Natural killer cell (primary cell): ENCODE measurements at regions of chr9 and their contacts with region 1.

Region 1: DNA sequence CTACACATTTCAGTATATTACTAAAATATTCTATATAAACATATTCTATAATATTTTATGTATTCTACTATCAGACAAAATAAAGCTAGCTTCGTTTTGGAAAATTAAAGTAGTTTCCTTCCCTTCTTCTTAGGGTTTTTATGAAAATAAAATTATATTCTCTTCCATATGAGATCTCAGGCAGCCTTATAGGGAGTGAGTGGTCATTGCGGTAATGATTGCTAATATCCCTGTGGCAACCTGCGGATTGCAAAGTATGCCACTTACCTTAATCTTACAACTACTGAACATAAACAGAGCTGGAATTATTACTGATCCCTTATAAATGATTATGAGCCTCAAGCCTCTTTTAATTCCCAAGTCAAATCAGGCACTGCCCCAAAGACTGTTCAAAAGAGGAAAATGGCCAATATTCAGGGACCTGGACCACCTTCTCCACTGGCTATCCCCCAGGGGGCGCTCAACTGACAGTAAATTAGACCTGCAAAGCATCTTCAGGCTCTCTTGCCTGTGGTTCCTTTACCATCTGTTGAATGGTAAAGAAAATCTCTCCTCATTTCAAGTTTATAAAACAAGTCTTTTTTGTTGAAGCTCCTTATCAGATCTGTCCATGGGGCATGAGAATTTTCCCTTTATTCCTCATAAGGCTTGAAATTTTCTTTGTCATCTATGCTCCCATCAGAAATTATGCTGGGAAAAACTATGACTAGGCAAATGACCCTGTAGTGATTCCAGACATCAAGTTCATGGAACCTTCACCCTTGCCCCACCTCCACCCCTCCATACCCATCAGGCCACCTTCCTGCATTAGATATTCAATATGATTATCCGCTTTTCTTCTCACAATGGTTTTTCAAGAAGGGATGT is 163.9 kb downstream of the CEMIP2 start:
- DNase-seq: peak; percentile 71 to 83
- ATAC-seq: peak; percentile 86 to 97 (median 89)
- H3K4me3 ChIP-seq: no peak overlapping the region
- H3K4me3 Mint-ChIP-seq: no peak overlapping the region
- H3K27ac ChIP-seq: no peak overlapping the region
- H3K27ac Mint-ChIP-seq: no peak overlapping the region
- H3K4me1 ChIP-seq: no peaks in the 10 kb centered on the region
- H3K4me1 Mint-ChIP-seq: no peaks in the 10 kb centered on the region
- H3K27me3 ChIP-seq: no peaks in the 10 kb centered on the region
- H3K27me3 Mint-ChIP-seq: no peaks in the 10 kb centered on the region
- CTCF ChIP-seq: peak; percentile 92

Region 2: GRCh38 chr9:71685394-71685793 is 81.0 kb after region 1 on chr9:
- intact Hi-C with region 1: loop called (anchors 1 kb)
- DNase-seq: peak in 1 of 2 donors; percentile 78
- ATAC-seq: peak; percentile 85 to 96 (median 86)
- H3K4me3 ChIP-seq: peak overlapping the region; percentile 11
- H3K4me3 Mint-ChIP-seq: peak overlapping the region; percentile 89
- H3K27ac ChIP-seq: peak overlapping the region; percentile 54
- H3K27ac Mint-ChIP-seq: peak overlapping the region; percentile 83 to 94
- H3K4me1 ChIP-seq: peaks cover 22% of the 10 kb centered on the region
- H3K4me1 Mint-ChIP-seq: peaks cover 45 to 48% of the 10 kb centered on the region in 2 donors
- H3K27me3 ChIP-seq: no peaks in the 10 kb centered on the region
- H3K27me3 Mint-ChIP-seq: no peaks in the 10 kb centered on the region
- CTCF ChIP-seq: no peak

Region 3: DNA sequence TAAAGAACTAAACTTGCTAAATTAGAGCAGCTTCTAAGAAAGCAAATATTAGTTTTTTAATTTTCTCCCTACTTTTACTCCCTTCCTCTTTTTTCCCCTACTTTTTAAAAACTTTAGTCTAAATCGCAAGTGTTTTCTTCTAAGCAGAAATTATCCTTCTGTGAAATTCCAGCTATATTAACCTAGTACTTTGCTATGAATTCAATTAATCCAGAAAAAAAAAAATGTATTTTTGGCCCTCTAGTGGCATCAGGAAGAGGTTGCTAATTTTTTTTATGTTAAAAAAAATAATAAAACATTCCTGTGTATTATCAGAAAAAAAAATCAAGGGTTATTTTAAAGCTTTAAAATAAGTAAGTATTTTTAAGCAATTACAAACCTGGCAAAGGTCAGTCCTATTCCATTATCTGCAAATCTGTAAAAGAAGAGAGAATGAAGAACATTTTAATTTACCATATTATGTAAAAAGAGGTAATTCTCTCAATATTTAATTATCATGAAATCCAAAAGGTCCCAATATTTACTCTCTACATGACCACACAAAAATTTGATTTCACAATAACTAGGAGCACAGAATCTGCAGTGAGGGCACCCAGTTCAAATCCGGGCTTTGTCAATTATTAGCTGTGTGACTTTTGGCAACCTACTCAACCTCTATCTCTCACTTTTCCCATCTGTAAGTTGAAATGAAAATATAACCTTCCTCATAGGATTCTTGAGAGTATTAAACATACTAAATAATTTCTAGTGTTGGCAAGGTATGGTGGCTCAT is 111.9 kb after region 1 on chr9:
- intact Hi-C with region 1: loop called (anchors 2 kb)
- DNase-seq: no peak
- ATAC-seq: no peak
- H3K4me3 ChIP-seq: no peak overlapping the region
- H3K4me3 Mint-ChIP-seq: no peak overlapping the region
- H3K27ac ChIP-seq: no peak overlapping the region
- H3K27ac Mint-ChIP-seq: peak overlapping the region; percentile 34 to 42
- H3K4me1 ChIP-seq: no peaks in the 10 kb centered on the region
- H3K4me1 Mint-ChIP-seq: peaks cover 0 to 26% of the 10 kb centered on the region in 2 donors
- H3K27me3 ChIP-seq: no peaks in the 10 kb centered on the region
- H3K27me3 Mint-ChIP-seq: no peaks in the 10 kb centered on the region
- CTCF ChIP-seq: peak; percentile 80

Region 4: GRCh38 chr9:71768388-71769174 is 164.2 kb after region 1 on chr9 and contains the start of gene CEMIP2:
- intact Hi-C with region 1: loop called (anchors 1 kb)
- DNase-seq: peak; percentile 86 to 93
- ATAC-seq: peak; percentile 82 to 95 (median 86)
- H3K4me3 ChIP-seq: peak within 1 kb of the TSS; percentile 88
- H3K4me3 Mint-ChIP-seq: peak within 1 kb of the TSS; percentile 92
- H3K27ac ChIP-seq: peak within 1 kb of the TSS; percentile 96
- H3K27ac Mint-ChIP-seq: peak within 1 kb of the TSS; percentile 88 to 94
- H3K4me1 ChIP-seq: peaks cover 29% of the 10 kb centered on the region
- H3K4me1 Mint-ChIP-seq: peaks cover 54 to 56% of the 10 kb centered on the region in 2 donors
- H3K27me3 ChIP-seq: no peaks in the 10 kb centered on the region
- H3K27me3 Mint-ChIP-seq: no peaks in the 10 kb centered on the region
- CTCF ChIP-seq: peak; percentile 62
- total RNA-seq, gene CEMIP2: 204 to 326 (median 230) TPM

Region 5: GRCh38 chr9:71819115-71819739 is 214.8 kb after region 1 on chr9:
- intact Hi-C with region 1: loop called (anchors 1 kb)
- DNase-seq: peak in 1 of 2 donors; percentile 80
- ATAC-seq: no peak
- H3K4me3 ChIP-seq: no peak overlapping the region
- H3K4me3 Mint-ChIP-seq: no peak overlapping the region
- H3K27ac ChIP-seq: no peak overlapping the region
- H3K27ac Mint-ChIP-seq: no peak overlapping the region
- H3K4me1 ChIP-seq: peaks cover 4% of the 10 kb centered on the region
- H3K4me1 Mint-ChIP-seq: peaks cover 10 to 15% of the 10 kb centered on the region in 2 donors
- H3K27me3 ChIP-seq: no peaks in the 10 kb centered on the region
- H3K27me3 Mint-ChIP-seq: no peaks in the 10 kb centered on the region
- CTCF ChIP-seq: peak; percentile 89

Region 6: GRCh38 chr9:72025931-72026342 is 421.5 kb after region 1 on chr9:
- intact Hi-C with region 1: loop called (anchors 1 kb)
- DNase-seq: no peak
- ATAC-seq: no peak
- H3K4me3 ChIP-seq: no peak overlapping the region
- H3K4me3 Mint-ChIP-seq: no peak overlapping the region
- H3K27ac ChIP-seq: no peak overlapping the region
- H3K27ac Mint-ChIP-seq: no peak overlapping the region
- H3K4me1 ChIP-seq: peaks cover 4% of the 10 kb centered on the region
- H3K4me1 Mint-ChIP-seq: no peaks in the 10 kb centered on the region
- H3K27me3 ChIP-seq: no peaks in the 10 kb centered on the region
- H3K27me3 Mint-ChIP-seq: no peaks in the 10 kb centered on the region
- CTCF ChIP-seq: no peak

Region 7: GRCh38 chr9:72271613-72272478 is 667.4 kb after region 1 on chr9:
- intact Hi-C with region 1: loop called (anchors 1 kb)
- DNase-seq: peak in 1 of 2 donors; percentile 73
- ATAC-seq: peak; percentile 66 to 79 (median 67)
- H3K4me3 ChIP-seq: no peak overlapping the region
- H3K4me3 Mint-ChIP-seq: no peak overlapping the region
- H3K27ac ChIP-seq: no peak overlapping the region
- H3K27ac Mint-ChIP-seq: no peak overlapping the region
- H3K4me1 ChIP-seq: no peaks in the 10 kb centered on the region
- H3K4me1 Mint-ChIP-seq: no peaks in the 10 kb centered on the region
- H3K27me3 ChIP-seq: no peaks in the 10 kb centered on the region
- H3K27me3 Mint-ChIP-seq: peaks cover 5 to 10% of the 10 kb centered on the region in 2 donors
- CTCF ChIP-seq: peak; percentile 89